ENCODE measurements at regions of chr1 and their contacts with region 1.

Region 1: DNA sequence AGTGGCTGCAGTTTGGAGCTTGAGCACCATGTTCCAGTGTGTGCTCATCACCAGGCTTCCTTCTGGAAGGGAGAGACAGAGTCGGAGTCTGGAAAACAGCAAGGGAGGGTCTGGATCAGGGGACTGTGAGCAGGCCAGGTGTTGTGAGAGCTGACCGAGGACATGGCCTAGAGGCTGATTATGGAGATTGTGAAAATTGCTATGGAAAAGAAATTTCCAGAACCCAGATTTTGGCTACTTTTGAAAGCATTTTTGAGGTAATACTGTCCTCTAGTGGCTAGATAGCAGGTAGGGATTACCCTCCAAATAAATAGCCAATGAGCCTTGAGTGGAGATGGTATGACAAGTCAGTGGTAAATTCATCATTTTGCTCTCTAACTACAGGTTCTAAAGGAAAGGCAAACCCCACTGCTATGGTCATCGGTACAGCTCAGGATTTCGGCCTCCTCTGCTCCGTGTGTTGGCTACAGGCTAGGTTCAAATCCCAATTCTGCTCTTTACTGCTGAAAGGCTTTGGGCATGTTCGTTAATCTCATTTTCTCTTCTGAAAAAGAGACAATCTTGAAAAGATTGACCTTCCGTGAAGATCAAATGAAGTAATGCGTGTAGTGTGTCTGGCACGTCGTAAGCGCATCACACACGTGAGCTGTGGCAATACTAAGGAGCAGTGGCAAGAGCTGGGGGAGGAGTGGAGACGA is 1.0 kb upstream of the HAO2 start:
- DNase-seq: peak; percentile 26
- H3K4me3 ChIP-seq: no peak overlapping the region
- CTCF ChIP-seq: peak; percentile 94

Region 2: DNA sequence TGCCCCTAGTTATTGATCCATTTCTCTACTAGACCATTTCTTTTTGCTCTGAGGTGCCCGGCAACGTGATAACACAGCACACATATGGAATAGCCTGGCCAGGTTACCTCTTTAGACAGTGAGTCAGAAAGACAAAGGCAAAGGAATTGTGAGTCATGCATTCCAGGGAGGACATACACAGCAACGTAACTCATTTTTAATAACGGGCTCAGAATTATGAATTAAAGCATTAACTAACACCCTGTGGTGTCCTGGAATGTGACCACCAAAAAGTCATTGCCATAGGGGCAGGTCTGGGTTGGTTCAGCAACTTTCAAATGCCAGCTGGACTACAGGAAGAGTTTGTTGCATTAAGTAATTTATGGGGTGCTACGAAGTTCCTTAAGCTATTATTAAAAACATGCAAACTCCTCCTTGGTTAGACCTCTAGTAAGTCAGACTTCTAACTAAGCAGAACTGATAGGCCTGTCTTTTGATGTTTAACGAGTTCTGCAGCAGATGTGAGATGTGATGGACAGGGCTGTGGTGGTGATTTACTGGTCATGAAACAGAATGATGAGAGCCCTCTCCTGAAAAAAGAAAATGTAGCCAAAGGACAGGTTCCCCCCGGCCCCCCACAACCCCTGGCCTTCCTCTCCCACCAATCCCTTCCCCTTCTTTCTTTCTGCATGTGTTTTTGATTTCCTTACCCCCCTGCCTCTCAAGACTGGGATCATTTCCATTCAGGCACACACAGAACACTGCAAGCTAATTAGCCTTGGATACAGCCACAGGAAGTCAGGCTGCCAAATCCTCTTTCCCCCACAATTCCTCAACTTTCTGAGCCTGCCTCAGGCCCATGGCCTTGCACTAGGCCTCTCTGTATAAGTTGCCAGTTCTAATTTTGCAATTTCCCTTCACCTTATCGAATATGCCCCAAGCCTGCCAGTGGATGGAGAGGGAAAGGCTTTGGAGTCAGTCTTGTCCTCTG is 87.8 kb before region 1 on chr1:
- in situ Hi-C with region 1: loop called (anchors 5 kb)
- DNase-seq: peak; percentile 86
- H3K4me3 ChIP-seq: no peak overlapping the region
- CTCF ChIP-seq: no peak

Measured in astrocyte of the cerebellum (primary cell).